Transverse colon (tissue), 4 donors: ENCODE measurements at regions of chr17 and their contacts with region 1.

Region 1: GRCh38 chr17:69679829-69680228 is 265.3 kb downstream of the MAP2K6 start:
- DNase-seq: no peak
- H3K4me3 ChIP-seq: no peak overlapping the region
- H3K27ac ChIP-seq: no peak overlapping the region
- H3K4me1 ChIP-seq: no peaks in the 10 kb centered on the region
- H3K27me3 ChIP-seq: no peaks in the 10 kb centered on the region
- CTCF ChIP-seq: no peak
- EP300 ChIP-seq: no peak
- POLR2A ChIP-seq: no peak

Region 2: GRCh38 chr17:69625474-69625873 is 54.4 kb before region 1 on chr17:
- in situ Hi-C with region 1: no loop called
- intact Hi-C with region 1: no loop called
- DNase-seq: no peak
- H3K4me3 ChIP-seq: no peak overlapping the region
- H3K27ac ChIP-seq: no peak overlapping the region
- H3K4me1 ChIP-seq: no peaks in the 10 kb centered on the region
- H3K27me3 ChIP-seq: no peaks in the 10 kb centered on the region
- CTCF ChIP-seq: no peak
- EP300 ChIP-seq: no peak
- POLR2A ChIP-seq: no peak

Region 3: DNA sequence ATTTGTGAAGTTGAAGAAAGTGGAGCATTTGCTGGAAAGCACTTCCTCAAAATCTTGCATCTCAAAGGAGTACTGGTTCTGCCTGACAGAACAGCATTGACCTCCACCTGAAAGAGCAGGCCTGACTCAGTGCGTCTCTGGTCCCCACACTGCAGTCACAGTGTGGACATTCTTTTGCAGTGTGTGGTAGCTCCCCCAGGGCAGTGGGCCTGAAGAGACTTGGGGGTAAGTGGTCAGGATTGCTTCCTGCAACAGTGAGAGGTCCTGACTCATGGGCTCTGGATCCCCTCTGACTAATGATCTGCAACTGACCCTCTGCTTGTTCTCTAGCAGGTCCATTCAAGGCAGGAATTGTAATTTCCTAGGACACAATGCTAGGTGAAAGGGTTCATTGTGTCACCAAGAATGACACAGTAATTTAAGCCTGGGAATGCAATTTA is 190.3 kb after region 1 on chr17:
- in situ Hi-C with region 1: no loop called
- intact Hi-C with region 1: loop called (anchors 5 kb)
- DNase-seq: no peak
- H3K4me3 ChIP-seq: no peak overlapping the region
- H3K27ac ChIP-seq: no peak overlapping the region
- H3K4me1 ChIP-seq: no peaks in the 10 kb centered on the region
- H3K27me3 ChIP-seq: no peaks in the 10 kb centered on the region
- CTCF ChIP-seq: no peak
- EP300 ChIP-seq: no peak
- POLR2A ChIP-seq: no peak